ENCODE measurements at regions of chr3 and their contacts with region 1.

Region 1: DNA sequence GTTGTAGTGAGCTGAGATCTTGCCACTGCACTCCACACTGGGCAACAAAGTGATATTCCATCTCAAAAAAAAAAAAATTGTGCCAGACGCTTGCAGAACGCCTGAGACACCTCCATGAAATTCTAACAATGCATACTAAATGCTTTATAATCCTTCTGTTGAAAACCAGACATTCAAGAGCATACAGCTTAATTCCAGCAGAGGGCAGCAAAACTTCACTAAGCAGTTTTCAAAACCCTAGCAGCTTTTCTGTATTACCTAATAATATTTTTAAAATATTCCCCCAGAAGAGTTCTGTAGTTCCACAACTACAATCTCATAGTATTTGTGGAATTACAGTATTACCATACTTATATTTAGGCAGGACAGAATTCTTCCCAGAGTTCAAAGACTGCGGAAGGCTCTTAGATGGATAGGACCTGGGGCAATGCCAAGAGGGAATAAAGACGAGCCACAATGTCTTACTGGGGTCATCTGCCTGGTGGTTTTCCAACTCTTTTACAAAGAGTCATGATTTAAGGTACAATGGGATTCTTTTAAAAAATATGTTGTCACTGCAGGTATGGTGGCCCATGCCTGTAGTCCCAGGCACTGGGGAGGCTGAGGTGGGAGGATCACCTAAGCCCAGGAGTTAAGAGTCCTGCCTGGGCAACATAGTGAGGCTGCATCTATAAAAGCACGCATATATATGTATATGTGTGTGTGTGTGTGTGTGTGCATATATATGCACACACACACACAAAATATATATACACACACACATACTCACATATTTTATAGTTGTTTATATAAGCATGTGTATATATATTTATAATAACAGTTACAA is 19.6 kb upstream of the TASOR start:
- DNase-seq: peak; percentile 81
- ATAC-seq: peak; percentile 64
- H3K4me3 ChIP-seq: no peak overlapping the region
- H3K4me3 Mint-ChIP-seq: no peak overlapping the region
- H3K27ac ChIP-seq: no peak overlapping the region
- H3K27ac Mint-ChIP-seq: no peak overlapping the region
- H3K4me1 ChIP-seq: peaks cover 0 to 4% of the 10 kb centered on the region in 2 donors
- H3K4me1 Mint-ChIP-seq: peaks cover 3% of the 10 kb centered on the region
- H3K27me3 ChIP-seq: no peaks in the 10 kb centered on the region
- H3K27me3 Mint-ChIP-seq: no peaks in the 10 kb centered on the region
- CTCF ChIP-seq: peak; percentile 93

Region 2: DNA sequence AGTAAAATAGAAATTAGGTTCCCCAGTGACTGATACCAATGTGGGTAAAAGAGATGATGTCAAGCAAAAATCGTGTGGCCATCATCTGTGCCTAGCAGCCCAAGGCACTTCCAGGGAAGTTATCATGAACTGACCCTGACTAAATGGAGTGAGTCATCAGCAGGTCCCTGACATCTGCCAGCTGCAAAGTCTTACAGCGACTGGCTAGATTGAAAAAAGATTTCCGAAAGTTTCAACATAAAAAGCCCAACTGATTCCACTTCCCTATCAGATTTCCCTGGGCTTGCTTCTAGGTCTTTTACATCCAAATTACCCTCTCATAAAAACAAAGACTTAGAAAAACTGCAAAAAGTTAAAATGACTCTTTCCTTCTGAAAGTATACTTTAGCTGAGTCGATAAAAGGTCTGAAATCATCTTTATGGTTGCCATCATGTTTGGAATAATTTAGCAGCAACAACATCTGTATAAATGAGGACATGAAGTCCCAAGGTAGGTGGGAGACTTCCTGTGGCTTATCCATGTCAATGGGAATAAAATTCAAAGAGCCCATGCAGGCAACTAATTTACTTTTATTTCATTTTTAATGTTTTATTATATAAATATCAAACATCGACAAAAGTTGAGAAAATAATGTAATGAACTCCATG is 577.2 kb before region 1 on chr3:
- CTCF ChIA-PET with region 1: no interaction called
- POLR2A ChIA-PET with region 1: no interaction called
- intact Hi-C with region 1: no loop called
- DNase-seq: no peak
- ATAC-seq: no peak
- H3K4me3 ChIP-seq: no peak overlapping the region
- H3K4me3 Mint-ChIP-seq: no peak overlapping the region
- H3K27ac ChIP-seq: no peak overlapping the region
- H3K27ac Mint-ChIP-seq: no peak overlapping the region
- H3K4me1 ChIP-seq: no peaks in the 10 kb centered on the region
- H3K4me1 Mint-ChIP-seq: no peaks in the 10 kb centered on the region
- H3K27me3 ChIP-seq: no peaks in the 10 kb centered on the region
- H3K27me3 Mint-ChIP-seq: no peaks in the 10 kb centered on the region
- CTCF ChIP-seq: no peak

Region 3: DNA sequence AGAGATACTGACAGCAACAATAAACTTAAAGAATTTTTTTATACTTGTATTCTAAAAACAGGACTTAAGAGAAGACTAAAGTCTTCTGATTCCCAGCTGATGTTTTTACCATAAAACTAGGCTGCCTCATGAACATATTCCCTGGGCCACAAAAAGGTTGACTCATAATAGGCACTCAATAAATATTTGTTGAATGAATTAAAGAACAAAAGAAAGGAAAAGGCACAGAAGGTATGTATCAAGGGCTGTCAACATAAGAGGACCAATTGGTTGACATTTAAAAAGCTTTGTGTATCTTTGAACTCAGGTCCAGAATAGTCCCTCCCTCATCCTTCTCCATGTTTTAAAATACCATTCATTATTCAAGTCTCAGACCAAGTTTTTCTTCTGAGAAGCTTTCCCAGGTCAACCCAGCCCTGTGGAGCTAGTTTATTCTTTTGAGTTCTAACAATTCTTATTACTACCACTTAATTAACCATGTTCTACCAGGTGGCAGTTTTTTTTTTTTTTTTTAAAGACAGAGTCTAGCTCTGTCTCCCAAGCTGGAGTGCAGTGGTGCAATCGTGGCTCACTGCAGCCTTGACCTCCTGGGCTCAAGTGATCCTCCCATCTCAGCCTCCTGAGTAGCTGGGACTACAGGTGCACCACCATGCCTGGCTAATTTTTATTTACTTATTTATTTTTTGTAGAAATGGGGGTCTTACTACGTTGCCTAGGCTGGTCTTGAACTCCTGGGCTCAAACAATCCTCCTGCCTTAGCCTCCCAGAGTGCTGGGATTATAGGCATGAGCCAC is 116.5 kb after region 1 on chr3:
- CTCF ChIA-PET with region 1: interaction called, 16 read pairs
- POLR2A ChIA-PET with region 1: no interaction called
- intact Hi-C with region 1: no loop called
- DNase-seq: no peak
- ATAC-seq: no peak
- H3K4me3 ChIP-seq: no peak overlapping the region
- H3K4me3 Mint-ChIP-seq: no peak overlapping the region
- H3K27ac ChIP-seq: no peak overlapping the region
- H3K27ac Mint-ChIP-seq: no peak overlapping the region
- H3K4me1 ChIP-seq: no peaks in the 10 kb centered on the region
- H3K4me1 Mint-ChIP-seq: no peaks in the 10 kb centered on the region
- H3K27me3 ChIP-seq: no peaks in the 10 kb centered on the region
- H3K27me3 Mint-ChIP-seq: no peaks in the 10 kb centered on the region
- CTCF ChIP-seq: no peak

Region 4: DNA sequence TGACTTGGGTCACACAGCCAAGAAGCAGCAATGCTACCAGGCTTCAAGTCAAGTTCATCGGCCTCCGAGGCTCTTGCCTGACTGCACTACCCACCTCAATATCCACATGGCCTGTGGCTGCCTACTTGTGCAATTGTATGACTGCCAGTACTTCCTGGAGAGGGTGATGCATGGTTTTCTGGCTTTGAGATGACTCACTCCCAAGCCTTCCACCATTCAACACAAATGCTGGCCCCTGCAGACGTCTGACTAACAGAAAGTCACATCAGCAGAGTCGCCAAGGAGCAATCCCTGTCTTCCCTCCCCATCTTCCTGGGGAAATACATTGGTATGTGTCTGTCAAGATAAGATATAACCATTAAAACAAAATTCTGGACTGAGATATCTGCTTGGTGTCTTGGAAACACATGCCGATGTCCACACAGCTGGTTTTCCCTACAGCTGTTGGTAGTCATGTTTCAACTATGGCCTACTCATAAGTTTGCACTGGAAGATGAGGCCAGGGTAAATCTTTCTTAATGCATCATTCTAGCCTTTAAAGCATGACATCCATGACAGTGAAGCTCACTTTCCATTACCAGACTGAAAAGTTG is 278.2 kb after region 1 on chr3:
- CTCF ChIA-PET with region 1: interaction called, 310 read pairs
- POLR2A ChIA-PET with region 1: no interaction called
- intact Hi-C with region 1: no loop called
- DNase-seq: no peak
- ATAC-seq: no peak
- H3K4me3 ChIP-seq: no peak overlapping the region
- H3K4me3 Mint-ChIP-seq: no peak overlapping the region
- H3K27ac ChIP-seq: no peak overlapping the region
- H3K27ac Mint-ChIP-seq: no peak overlapping the region
- H3K4me1 ChIP-seq: no peaks in the 10 kb centered on the region
- H3K4me1 Mint-ChIP-seq: no peaks in the 10 kb centered on the region
- H3K27me3 ChIP-seq: no peaks in the 10 kb centered on the region
- H3K27me3 Mint-ChIP-seq: no peaks in the 10 kb centered on the region
- CTCF ChIP-seq: no peak

Measured in B cell (primary cell).